AG04449 (cell line): ENCODE measurements at regions of chr11 and their contacts with region 1.

Region 1: DNA sequence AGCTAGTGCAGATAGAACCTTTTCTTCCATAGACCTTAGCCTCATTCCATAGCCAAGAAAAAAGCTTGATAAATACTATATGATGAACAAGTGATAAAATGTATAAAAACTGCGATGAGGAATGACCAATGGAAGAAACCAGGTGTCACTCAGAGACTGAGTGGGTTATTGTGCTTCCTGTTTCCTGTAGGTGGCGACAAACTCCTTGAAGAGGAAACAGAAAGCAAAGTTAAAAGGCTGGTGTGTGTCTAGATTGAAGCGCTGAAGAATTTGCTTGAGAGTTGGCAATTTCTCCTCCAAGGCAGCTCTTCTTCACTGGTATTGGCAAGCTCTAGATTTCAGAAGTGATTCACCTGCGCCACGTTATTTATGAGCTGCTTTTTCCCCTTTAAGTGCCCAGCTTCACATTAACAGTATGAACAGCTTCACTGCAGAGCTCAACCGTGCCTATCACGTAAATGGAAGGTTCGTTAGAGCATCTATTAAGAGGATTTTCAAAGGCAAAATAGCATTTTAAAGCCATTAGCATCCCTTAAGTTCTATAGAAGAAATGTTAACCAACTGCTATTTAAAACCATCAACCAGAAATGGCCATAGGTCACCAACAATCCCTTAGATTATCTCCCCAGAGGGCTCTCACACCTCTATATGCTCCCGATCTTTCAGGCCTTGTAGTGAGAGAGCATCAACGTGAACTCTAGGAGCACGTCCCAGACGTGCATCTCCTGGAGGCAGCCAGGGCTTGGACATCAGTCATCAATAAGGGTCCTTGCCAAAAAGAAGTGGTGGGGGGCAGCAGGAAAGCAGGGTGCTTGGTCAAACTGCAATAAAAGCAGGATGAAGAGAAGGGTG is 179.4 kb downstream of the CADM1 start:
- DNase-seq: no peak
- H3K4me3 ChIP-seq: no peak overlapping the region
- CTCF ChIP-seq: peak; percentile 70

Region 2: GRCh38 chr11:115279813-115280761 is 44.7 kb before region 1 on chr11:
- CTCF ChIA-PET with region 1: interaction called, 12 read pairs
- POLR2A ChIA-PET with region 1: no interaction called
- DNase-seq: peak; percentile 45
- H3K4me3 ChIP-seq: no peak overlapping the region
- CTCF ChIP-seq: no peak

Region 3: GRCh38 chr11:115314330-115314920 is 10.4 kb before region 1 on chr11:
- CTCF ChIA-PET with region 1: interaction called, 17 read pairs
- POLR2A ChIA-PET with region 1: no interaction called
- DNase-seq: no peak
- H3K4me3 ChIP-seq: no peak overlapping the region
- CTCF ChIP-seq: no peak

Region 4: GRCh38 chr11:115334932-115335788 is 10.4 kb after region 1 on chr11:
- CTCF ChIA-PET with region 1: interaction called, 27 read pairs
- POLR2A ChIA-PET with region 1: no interaction called
- DNase-seq: no peak
- H3K4me3 ChIP-seq: no peak overlapping the region
- CTCF ChIP-seq: peak; percentile 42

Region 5: DNA sequence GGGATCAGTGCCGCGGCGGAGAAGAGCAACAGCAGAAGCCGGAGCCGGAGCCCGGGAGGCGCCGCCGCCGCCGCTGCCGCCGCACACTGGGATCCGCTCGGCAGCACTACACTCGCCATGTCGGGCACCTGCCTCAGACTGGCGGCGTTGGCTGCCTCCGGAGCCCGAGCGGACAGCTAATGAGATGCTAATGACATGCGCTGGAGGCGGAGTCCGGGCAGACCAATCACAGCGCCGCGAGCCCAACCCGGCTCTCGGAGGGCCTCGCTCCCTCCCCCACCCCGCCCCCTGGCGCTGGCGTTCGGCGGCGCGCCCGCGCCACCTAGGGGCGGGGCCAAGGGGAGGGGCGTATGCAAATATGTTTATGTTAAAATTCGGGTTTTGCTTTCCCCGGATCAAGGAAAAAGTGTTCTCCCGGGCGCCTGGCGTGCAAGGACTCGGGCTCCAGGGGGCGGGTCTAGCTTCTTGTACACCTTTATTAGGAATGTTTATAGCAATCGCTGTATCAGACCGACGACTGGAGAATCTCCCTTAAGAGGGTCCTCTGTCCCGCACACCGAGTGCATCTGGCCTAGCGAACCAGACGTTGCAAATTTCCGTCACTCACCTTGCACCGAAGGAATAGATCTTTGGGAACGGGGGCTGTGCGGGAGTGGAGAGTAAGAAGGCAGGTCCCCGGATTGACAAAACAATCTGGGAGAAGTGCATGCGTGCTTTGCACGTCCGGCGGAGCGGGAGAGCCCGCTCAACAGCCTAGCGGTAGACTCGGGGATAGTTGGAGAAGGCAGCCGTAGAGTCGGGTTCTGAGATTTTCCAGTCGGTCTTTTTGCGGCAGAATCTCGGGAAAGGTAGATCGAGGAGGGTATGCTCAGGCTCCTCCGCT is 179.7 kb after region 1 on chr11 and contains the start of gene CADM1:
- CTCF ChIA-PET with region 1: interaction called, 12 read pairs
- POLR2A ChIA-PET with region 1: no interaction called
- DNase-seq: peak; percentile 52
- H3K4me3 ChIP-seq: peak within 1 kb of the TSS; percentile 89
- CTCF ChIP-seq: peak; percentile 75